Mammary epithelial cell (primary cell): ENCODE measurements at regions of chr1 and their contacts with region 1.

Region 1: DNA sequence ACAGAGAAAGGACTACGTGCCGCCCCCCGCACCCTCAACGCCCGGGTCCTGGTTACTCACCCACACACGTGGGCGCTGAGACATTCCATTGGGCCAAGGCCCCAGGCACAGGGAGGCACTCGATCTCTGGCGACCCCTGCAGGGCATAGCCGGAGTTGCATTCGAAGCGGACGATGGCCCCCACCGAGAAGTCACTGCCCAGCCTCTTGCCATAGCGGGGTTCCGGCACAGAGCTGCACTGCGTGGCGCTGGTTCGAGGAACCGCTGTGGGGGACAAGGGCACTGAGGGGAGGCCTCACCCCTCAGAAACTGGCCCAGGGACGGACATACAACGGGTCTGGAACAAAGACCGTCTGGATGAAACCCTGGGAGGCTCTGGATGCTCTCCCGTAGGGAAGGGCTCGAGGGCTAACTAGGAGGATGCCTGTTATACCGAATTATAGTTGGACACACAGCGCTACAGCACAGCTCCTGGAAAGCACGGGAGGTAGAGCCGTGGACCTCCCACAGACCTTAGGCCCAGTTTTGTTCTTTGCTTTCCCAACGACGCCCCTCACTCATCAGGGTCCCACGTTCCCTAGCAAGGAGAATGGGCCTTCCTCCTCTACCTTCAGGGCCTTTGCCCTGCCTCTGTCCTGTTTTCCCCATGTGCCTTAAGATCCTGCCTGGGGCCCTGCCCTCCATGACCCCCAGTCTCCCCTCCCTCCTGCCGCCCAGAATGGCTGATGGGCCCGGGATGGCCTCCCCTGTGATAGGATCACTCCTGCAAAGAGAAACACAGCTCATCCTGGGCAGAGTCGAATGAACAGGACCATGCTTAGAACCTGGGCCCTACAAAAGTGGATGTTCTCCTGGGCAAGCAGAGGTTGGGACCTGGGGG is 152.8 kb downstream of the ZSCAN20 start:
- DNase-seq: no peak
- H3K4me3 ChIP-seq: no peak overlapping the region
- H3K27ac ChIP-seq: no peak overlapping the region
- H3K4me1 ChIP-seq: no peaks in the 10 kb centered on the region
- H3K27me3 ChIP-seq: peaks cover 4% of the 10 kb centered on the region
- CTCF ChIP-seq: peak; percentile 7 to 18

Region 2: DNA sequence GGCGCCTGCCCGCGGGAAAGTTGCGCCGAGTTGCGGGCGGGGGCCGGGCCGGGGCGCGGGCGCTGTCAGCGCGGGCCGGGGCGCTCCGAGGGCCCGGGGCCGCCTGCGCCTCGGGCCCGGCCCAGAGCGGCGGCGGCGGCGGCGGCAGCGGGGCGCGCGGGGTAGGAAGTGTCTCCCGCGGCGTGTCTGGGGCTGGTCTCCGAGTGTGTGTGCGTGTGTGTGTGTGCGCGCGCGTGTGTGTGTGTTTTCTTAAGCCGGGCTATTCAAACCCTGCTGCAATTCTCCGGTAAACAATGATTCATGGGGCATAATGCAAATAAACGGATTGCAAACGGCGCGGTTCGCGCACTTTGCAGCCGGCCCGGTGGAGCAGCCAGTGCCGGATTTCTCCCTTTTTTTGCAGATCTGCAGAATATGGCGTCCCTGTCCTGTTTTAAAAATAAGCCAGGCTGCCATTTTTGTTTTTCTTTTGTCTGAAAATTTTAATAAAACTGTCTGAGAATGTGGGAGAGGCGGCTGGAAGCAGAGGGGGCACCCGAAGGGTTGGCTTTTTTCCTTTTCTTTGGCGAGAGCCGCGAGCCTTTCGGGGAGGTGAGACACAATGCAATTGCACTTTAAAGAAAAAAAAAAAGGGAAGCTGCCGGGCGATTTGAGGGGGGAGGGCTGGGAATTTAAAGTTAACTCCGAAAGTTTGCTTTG is 368.4 kb before region 1 on chr1:
- CTCF ChIA-PET with region 1: no interaction called
- dilution Hi-C with region 1: loop called (anchors 25 kb)
- in situ Hi-C with region 1: no loop called
- intact Hi-C with region 1: no loop called
- DNase-seq: peak; percentile 66
- H3K4me3 ChIP-seq: peak overlapping the region; percentile 57 to 92 (median 59)
- H3K27ac ChIP-seq: peak overlapping the region; percentile 70
- H3K4me1 ChIP-seq: peaks cover 17% of the 10 kb centered on the region
- H3K27me3 ChIP-seq: no peaks in the 10 kb centered on the region
- CTCF ChIP-seq: no peak

Region 3: DNA sequence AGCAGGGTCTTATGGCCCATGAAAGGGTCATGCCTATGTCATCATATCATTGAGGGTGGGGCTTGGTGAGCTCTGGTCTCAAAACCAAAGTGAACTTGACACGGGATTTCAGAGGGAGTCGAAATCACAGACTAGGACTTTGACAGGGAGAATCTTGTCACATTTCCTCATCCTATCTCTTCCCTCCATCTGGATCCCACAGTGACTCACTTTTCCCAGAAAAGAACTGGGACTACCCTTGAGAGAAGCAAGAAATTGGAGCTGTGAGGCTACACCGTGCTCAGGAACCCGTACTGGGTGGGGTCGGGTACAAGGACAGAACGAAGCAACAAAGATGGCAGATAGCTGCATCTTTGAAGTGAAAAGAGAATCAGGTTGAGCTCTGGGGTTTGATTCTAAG is 83.3 kb before region 1 on chr1:
- CTCF ChIA-PET with region 1: no interaction called
- dilution Hi-C with region 1: no loop called
- in situ Hi-C with region 1: no loop called
- intact Hi-C with region 1: no loop called
- DNase-seq: no peak
- H3K4me3 ChIP-seq: no peak overlapping the region
- H3K27ac ChIP-seq: no peak overlapping the region
- H3K4me1 ChIP-seq: no peaks in the 10 kb centered on the region
- H3K27me3 ChIP-seq: no peaks in the 10 kb centered on the region
- CTCF ChIP-seq: no peak